ENCODE measurements at regions of chr12 and their contacts with region 1.

Region 1: GRCh38 chr12:116533343-116534251 is 25.6 kb upstream of the MAP1LC3B2 start:
- DNase-seq: peak; percentile 47 to 79 (median 69)
- ATAC-seq: peak; percentile 95
- H3K4me3 ChIP-seq: peak overlapping the region; percentile 84
- H3K4me3 Mint-ChIP-seq: peak overlapping the region; percentile 82 to 97 (median 88)
- H3K27ac ChIP-seq: peak overlapping the region; percentile 47
- H3K27ac Mint-ChIP-seq: peak overlapping the region in 8 of 9 donors; percentile 22 to 82 (median 70)
- H3K4me1 ChIP-seq: peaks cover 6 to 9% of the 10 kb centered on the region in 2 donors
- H3K4me1 Mint-ChIP-seq: peaks cover 20 to 40% (median 28%) of the 10 kb centered on the region in 7 donors
- H3K27me3 ChIP-seq: no peaks in the 10 kb centered on the region
- H3K27me3 Mint-ChIP-seq: peaks cover 0 to 14% (median 0%) of the 10 kb centered on the region in 5 donors

Region 2: DNA sequence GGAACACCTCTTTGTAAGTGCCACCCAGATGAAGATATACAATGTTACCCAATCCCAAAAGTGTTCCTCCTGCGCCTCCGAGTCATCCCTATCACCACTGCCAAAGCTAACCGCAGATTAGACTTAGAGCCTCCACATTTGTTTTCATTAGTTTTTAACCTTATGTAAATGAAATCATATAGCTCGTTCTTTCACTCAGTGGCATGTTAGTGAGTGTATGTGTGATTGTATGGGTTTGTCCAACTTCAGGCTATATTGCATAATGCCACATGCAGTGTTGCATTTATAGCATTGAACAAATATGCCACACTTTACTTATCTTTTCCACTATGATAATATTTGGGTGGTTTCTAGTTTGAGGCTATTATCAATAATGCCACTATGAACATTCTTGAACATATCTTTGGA is 43.6 kb after region 1 on chr12:
- CTCF ChIA-PET with region 1: interaction called, 3 read pairs
- POLR2A ChIA-PET with region 1: no interaction called
- intact Hi-C with region 1: loop called in 1 of 2 experiments (anchors 5 kb)
- DNase-seq: no peak
- ATAC-seq: no peak
- H3K4me3 ChIP-seq: no peak overlapping the region
- H3K4me3 Mint-ChIP-seq: no peak overlapping the region
- H3K27ac ChIP-seq: no peak overlapping the region
- H3K27ac Mint-ChIP-seq: peak overlapping the region in 1 of 9 donors; percentile 6
- H3K4me1 ChIP-seq: no peaks in the 10 kb centered on the region
- H3K4me1 Mint-ChIP-seq: peaks cover 0 to 16% (median 2%) of the 10 kb centered on the region in 7 donors
- H3K27me3 ChIP-seq: no peaks in the 10 kb centered on the region
- H3K27me3 Mint-ChIP-seq: peaks cover 0 to 14% (median 0%) of the 10 kb centered on the region in 5 donors

Region 3: GRCh38 chr12:116594325-116595038 is 60.9 kb after region 1 on chr12:
- CTCF ChIA-PET with region 1: interaction called, 3 read pairs
- POLR2A ChIA-PET with region 1: no interaction called
- intact Hi-C with region 1: loop called (anchors 1 to 10 kb)
- DNase-seq: peak; percentile 24 to 77 (median 69)
- ATAC-seq: peak; percentile 93
- H3K4me3 ChIP-seq: peak overlapping the region; percentile 5
- H3K4me3 Mint-ChIP-seq: peak overlapping the region; percentile 16 to 85 (median 63)
- H3K27ac ChIP-seq: no peak overlapping the region
- H3K27ac Mint-ChIP-seq: peak overlapping the region; percentile 42 to 78 (median 69)
- H3K4me1 ChIP-seq: peaks cover 9 to 32% of the 10 kb centered on the region in 2 donors
- H3K4me1 Mint-ChIP-seq: peaks cover 34 to 51% (median 47%) of the 10 kb centered on the region in 7 donors
- H3K27me3 ChIP-seq: no peaks in the 10 kb centered on the region
- H3K27me3 Mint-ChIP-seq: peaks cover 0 to 8% (median 0%) of the 10 kb centered on the region in 5 donors

Region 4: GRCh38 chr12:116855744-116856470 is 322.3 kb after region 1 on chr12:
- CTCF ChIA-PET with region 1: no interaction called
- POLR2A ChIA-PET with region 1: no interaction called
- intact Hi-C with region 1: no loop called
- DNase-seq: no peak
- ATAC-seq: no peak
- H3K4me3 ChIP-seq: no peak overlapping the region
- H3K4me3 Mint-ChIP-seq: no peak overlapping the region
- H3K27ac ChIP-seq: no peak overlapping the region
- H3K27ac Mint-ChIP-seq: no peak overlapping the region
- H3K4me1 ChIP-seq: no peaks in the 10 kb centered on the region
- H3K4me1 Mint-ChIP-seq: peaks cover 0 to 9% (median 0%) of the 10 kb centered on the region in 7 donors
- H3K27me3 ChIP-seq: no peaks in the 10 kb centered on the region
- H3K27me3 Mint-ChIP-seq: peaks cover 27 to 49% (median 30%) of the 10 kb centered on the region in 5 donors